Psoas muscle (tissue), 8 donors: ENCODE measurements at regions of chr3 and their contacts with region 1.

Region 1: DNA sequence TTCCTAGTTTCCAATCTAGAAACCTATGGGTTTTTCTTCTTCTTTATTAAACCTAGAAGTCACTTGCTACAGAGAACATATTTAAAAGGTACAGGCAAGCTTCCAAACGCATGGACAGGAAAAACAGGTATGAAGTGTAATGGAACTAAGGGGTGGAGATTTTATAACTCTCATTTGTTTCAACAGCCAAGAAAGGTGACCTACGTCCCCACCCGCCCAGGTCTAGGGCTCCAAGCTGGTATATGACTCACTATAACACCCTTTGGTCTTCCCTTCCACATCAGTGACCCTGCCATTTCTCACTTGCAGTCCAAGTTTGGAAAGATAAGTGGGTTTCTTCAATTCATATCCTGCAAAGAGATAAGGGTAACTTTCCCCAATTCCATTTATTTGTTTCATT is 6.0 kb upstream of the LIPH start:
- DNase-seq: no peak
- ATAC-seq: no peak
- H3K4me3 ChIP-seq: no peak overlapping the region
- H3K27ac ChIP-seq: no peak overlapping the region
- H3K4me1 ChIP-seq: no peaks in the 10 kb centered on the region
- H3K27me3 ChIP-seq: peaks cover 0 to 9% (median 3%) of the 10 kb centered on the region in 3 donors
- CTCF ChIP-seq: no peak

Region 2: DNA sequence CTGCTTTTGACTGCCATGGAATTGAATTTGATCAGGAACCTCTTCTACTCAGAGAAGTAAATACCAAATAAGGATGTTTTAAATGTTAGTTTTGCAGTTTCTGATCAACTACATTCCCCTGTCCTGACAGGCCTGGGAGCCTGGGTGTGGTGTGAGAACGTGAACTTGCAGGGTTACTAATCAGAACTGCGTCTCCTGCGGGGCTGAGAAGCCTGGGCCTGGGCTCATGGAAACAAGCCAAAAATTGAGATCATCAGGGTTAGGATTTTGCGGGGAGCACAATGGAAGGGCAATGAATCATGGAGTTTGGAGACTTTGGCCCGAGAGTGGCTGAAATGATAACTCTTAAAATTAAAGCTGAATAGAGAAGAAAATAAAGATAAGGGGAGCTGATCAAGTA is 357.8 kb before region 1 on chr3:
- intact Hi-C with region 1: no loop called
- DNase-seq: no peak
- ATAC-seq: no peak
- H3K4me3 ChIP-seq: no peak overlapping the region
- H3K27ac ChIP-seq: no peak overlapping the region
- H3K4me1 ChIP-seq: no peaks in the 10 kb centered on the region
- H3K27me3 ChIP-seq: no peaks in the 10 kb centered on the region
- CTCF ChIP-seq: no peak

Region 3: GRCh38 chr3:185270262-185270955 is 288.0 kb before region 1 on chr3:
- intact Hi-C with region 1: no loop called
- DNase-seq: no peak
- ATAC-seq: no peak
- H3K4me3 ChIP-seq: no peak overlapping the region
- H3K27ac ChIP-seq: no peak overlapping the region
- H3K4me1 ChIP-seq: no peaks in the 10 kb centered on the region
- H3K27me3 ChIP-seq: peaks cover 2 to 11% (median 3%) of the 10 kb centered on the region in 3 donors
- CTCF ChIP-seq: no peak

Region 4: GRCh38 chr3:185353823-185354614 is 204.4 kb before region 1 on chr3:
- intact Hi-C with region 1: loop called in 1 of 2 experiments (anchors 5 kb)
- DNase-seq: peak; percentile 39 to 61
- ATAC-seq: peak; percentile 84 to 95 (median 94)
- H3K4me3 ChIP-seq: no peak overlapping the region
- H3K27ac ChIP-seq: no peak overlapping the region
- H3K4me1 ChIP-seq: no peaks in the 10 kb centered on the region
- H3K27me3 ChIP-seq: no peaks in the 10 kb centered on the region
- CTCF ChIP-seq: peak; percentile 61

Region 5: GRCh38 chr3:185508335-185508991 is 49.9 kb before region 1 on chr3:
- intact Hi-C with region 1: no loop called
- DNase-seq: no peak
- ATAC-seq: no peak
- H3K4me3 ChIP-seq: no peak overlapping the region
- H3K27ac ChIP-seq: no peak overlapping the region
- H3K4me1 ChIP-seq: no peaks in the 10 kb centered on the region
- H3K27me3 ChIP-seq: peaks cover 0 to 2% (median 0%) of the 10 kb centered on the region in 3 donors
- CTCF ChIP-seq: no peak